ENCODE measurements at regions of chr9 and their contacts with region 1.

Region 1: DNA sequence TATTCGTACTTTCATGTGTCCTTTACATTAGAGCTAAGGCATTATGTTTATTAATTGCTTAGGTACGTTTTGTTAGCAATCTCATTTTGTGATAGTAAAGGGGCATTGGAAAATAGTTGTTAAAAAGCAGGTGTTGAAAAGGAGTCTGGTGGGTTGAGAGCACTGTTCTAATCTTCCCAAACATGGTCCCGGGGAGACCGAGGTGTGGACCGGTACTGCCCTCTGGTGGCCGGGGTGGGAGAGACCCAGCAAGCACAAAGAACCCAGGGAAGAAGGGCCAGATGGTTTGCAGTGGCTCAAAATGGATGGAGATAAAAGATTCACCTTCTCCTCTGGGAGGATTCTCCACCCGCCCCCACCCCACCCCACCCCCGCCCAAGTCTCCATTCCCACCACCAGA is 26.1 kb downstream of the IDNK start:
- DNase-seq: peak; percentile 82
- H3K4me3 Mint-ChIP-seq: no peak overlapping the region
- H3K27ac Mint-ChIP-seq: no peak overlapping the region
- H3K4me1 Mint-ChIP-seq: peaks cover 3% of the 10 kb centered on the region
- H3K27me3 Mint-ChIP-seq: no peaks in the 10 kb centered on the region

Region 2: GRCh38 chr9:83636813-83637212 is 12.3 kb before region 1 on chr9:
- CTCF ChIA-PET with region 1: interaction called, 26 read pairs
- intact Hi-C with region 1: no loop called
- DNase-seq: no peak
- H3K4me3 Mint-ChIP-seq: no peak overlapping the region
- H3K27ac Mint-ChIP-seq: no peak overlapping the region
- H3K4me1 Mint-ChIP-seq: no peaks in the 10 kb centered on the region
- H3K27me3 Mint-ChIP-seq: no peaks in the 10 kb centered on the region

Measured in activated naive CD4-positive, alpha-beta T cell treated with anti-CD3 and anti-CD28 coated beads for 36 hours (primary cell).